Endothelial cell of umbilical vein (primary cell): ENCODE measurements at regions of chr3 and their contacts with region 1.

Region 1: DNA sequence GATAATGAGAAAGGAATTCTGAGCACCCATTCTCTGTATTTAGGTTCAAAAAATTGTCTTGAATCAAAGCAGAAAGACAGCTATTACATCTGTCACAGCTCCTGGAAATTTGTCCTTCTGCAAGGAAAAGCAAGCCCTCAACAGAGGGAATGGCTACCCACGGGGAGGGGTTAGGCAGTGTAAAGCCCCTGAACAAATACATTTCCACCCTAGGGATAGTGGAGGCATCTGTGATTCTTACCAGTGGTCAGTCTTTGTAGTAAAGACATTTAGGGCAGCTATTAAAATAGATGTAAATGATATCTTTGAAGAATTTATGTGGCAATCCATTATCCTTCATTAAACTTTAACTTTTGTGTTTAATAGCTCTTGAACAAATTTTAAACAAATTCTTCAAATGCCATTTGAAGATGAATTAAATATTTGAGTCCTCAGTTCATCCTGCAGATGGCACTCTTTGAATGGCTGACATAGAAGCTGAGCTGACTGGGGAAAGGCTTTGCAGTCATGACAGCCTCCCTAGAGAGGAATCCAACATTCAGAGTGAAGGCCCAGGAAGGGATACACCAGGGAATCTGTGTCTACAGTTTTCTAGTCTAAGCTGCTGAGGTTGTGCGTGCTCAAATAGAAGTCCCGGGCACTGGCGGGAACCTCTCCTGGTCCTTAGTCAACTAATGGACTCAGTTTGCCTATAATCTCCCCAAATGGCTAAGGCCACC is 359.7 kb upstream of the ROPN1 start:
- DNase-seq: peak; percentile 61
- H3K4me3 ChIP-seq: no peak overlapping the region
- H3K27ac ChIP-seq: no peak overlapping the region
- H3K4me1 ChIP-seq: no peaks in the 10 kb centered on the region
- H3K27me3 ChIP-seq: peaks cover 0 to 2% of the 10 kb centered on the region in 2 experiments
- CTCF ChIP-seq: peak; percentile 38 to 54
- POLR2A ChIP-seq: no peak

Region 2: GRCh38 chr3:124014366-124014942 is 337.1 kb before region 1 on chr3:
- CTCF ChIA-PET with region 1: interaction called, 6 read pairs
- POLR2A ChIA-PET with region 1: no interaction called
- dilution Hi-C with region 1: no loop called
- intact Hi-C with region 1: loop called (anchors 2 kb)
- DNase-seq: peak; percentile 23
- H3K4me3 ChIP-seq: no peak overlapping the region
- H3K27ac ChIP-seq: no peak overlapping the region
- H3K4me1 ChIP-seq: peaks cover 7% of the 10 kb centered on the region
- H3K27me3 ChIP-seq: peaks cover 0 to 5% of the 10 kb centered on the region in 2 experiments
- CTCF ChIP-seq: no peak
- POLR2A ChIP-seq: no peak

Region 3: GRCh38 chr3:124363476-124363875 is 11.9 kb after region 1 on chr3:
- CTCF ChIA-PET with region 1: interaction called, 12 read pairs
- POLR2A ChIA-PET with region 1: no interaction called
- dilution Hi-C with region 1: no loop called
- intact Hi-C with region 1: no loop called
- DNase-seq: no peak
- H3K4me3 ChIP-seq: no peak overlapping the region
- H3K27ac ChIP-seq: no peak overlapping the region
- H3K4me1 ChIP-seq: no peaks in the 10 kb centered on the region
- H3K27me3 ChIP-seq: peaks cover 0 to 3% of the 10 kb centered on the region in 2 experiments
- CTCF ChIP-seq: no peak
- POLR2A ChIP-seq: no peak

Region 4: DNA sequence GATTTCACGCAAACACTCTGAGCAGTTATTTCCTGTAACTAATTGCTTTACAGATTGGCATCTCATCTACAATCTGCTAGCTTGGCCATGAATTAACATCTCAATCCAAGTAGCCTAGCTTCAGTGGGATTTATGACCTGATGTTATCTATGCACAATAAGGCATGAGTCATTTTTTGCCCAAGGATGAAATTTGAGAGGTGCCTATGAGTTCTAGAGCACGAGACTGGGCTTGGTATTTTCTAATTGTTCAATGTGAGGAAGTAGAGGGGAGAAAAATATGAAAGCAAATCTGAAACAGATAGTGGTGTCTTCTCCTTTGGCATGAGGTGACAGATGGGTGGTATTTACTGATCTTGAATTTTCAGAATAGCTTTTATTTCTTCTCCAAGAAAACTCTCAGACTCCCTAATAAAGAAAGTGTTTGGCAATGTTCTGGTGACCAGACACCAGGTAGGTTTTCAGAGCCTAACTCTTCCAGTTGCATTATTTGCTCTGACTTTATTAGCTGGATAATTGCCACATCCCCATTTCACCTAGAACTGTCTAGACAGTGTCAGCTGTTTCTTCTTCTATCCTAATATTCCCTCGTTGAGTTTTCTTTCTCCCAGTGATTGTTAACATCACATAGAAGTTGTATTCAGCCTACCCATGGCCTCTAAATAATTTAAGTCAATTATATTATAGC is 77.7 kb after region 1 on chr3:
- CTCF ChIA-PET with region 1: interaction called, 17 read pairs
- POLR2A ChIA-PET with region 1: no interaction called
- dilution Hi-C with region 1: no loop called
- intact Hi-C with region 1: no loop called
- DNase-seq: peak; percentile 88
- H3K4me3 ChIP-seq: no peak overlapping the region
- H3K27ac ChIP-seq: peak overlapping the region; percentile 23
- H3K4me1 ChIP-seq: peaks cover 27% of the 10 kb centered on the region
- H3K27me3 ChIP-seq: no peaks in the 10 kb centered on the region
- CTCF ChIP-seq: no peak
- POLR2A ChIP-seq: no peak

Region 5: GRCh38 chr3:124439603-124440002 is 88.0 kb after region 1 on chr3:
- CTCF ChIA-PET with region 1: interaction called, 11 read pairs
- POLR2A ChIA-PET with region 1: no interaction called
- dilution Hi-C with region 1: no loop called
- intact Hi-C with region 1: no loop called
- DNase-seq: no peak
- H3K4me3 ChIP-seq: no peak overlapping the region
- H3K27ac ChIP-seq: no peak overlapping the region
- H3K4me1 ChIP-seq: no peaks in the 10 kb centered on the region
- H3K27me3 ChIP-seq: no peaks in the 10 kb centered on the region
- CTCF ChIP-seq: no peak
- POLR2A ChIP-seq: no peak

Region 6: DNA sequence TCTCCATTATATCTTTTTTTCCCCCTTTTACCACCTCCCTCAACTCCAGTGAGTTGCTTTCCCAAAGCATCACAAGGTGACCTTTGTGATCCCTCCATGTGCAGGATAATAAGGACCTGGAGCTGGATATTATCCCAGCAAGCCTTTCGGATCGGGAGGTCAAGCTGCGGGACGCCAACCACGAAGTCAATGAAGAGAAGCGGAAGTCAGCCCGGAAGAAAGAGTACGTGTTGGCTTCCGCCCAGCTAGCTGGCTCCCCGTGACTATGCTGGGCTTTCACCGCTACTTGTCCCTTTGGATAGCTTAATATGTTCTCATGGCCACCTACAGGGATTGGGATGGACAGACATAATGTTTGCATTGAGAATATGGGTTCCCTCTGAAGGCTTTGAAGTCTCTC is 104.9 kb after region 1 on chr3:
- CTCF ChIA-PET with region 1: interaction called, 256 read pairs
- POLR2A ChIA-PET with region 1: no interaction called
- dilution Hi-C with region 1: no loop called
- intact Hi-C with region 1: no loop called
- DNase-seq: no peak
- H3K4me3 ChIP-seq: no peak overlapping the region
- H3K27ac ChIP-seq: no peak overlapping the region
- H3K4me1 ChIP-seq: no peaks in the 10 kb centered on the region
- H3K27me3 ChIP-seq: no peaks in the 10 kb centered on the region
- CTCF ChIP-seq: no peak
- POLR2A ChIP-seq: no peak

Region 7: GRCh38 chr3:124467980-124468902 is 116.7 kb after region 1 on chr3:
- CTCF ChIA-PET with region 1: interaction called, 256 read pairs
- POLR2A ChIA-PET with region 1: no interaction called
- dilution Hi-C with region 1: no loop called
- intact Hi-C with region 1: loop called (anchors 1 kb)
- DNase-seq: peak; percentile 58
- H3K4me3 ChIP-seq: no peak overlapping the region
- H3K27ac ChIP-seq: no peak overlapping the region
- H3K4me1 ChIP-seq: no peaks in the 10 kb centered on the region
- H3K27me3 ChIP-seq: peaks cover 0 to 2% of the 10 kb centered on the region in 2 experiments
- CTCF ChIP-seq: peak; percentile 91 to 97
- POLR2A ChIP-seq: no peak